GM10248 (cell line): ENCODE measurements at regions of chr20 and their contacts with region 1.

Region 1: DNA sequence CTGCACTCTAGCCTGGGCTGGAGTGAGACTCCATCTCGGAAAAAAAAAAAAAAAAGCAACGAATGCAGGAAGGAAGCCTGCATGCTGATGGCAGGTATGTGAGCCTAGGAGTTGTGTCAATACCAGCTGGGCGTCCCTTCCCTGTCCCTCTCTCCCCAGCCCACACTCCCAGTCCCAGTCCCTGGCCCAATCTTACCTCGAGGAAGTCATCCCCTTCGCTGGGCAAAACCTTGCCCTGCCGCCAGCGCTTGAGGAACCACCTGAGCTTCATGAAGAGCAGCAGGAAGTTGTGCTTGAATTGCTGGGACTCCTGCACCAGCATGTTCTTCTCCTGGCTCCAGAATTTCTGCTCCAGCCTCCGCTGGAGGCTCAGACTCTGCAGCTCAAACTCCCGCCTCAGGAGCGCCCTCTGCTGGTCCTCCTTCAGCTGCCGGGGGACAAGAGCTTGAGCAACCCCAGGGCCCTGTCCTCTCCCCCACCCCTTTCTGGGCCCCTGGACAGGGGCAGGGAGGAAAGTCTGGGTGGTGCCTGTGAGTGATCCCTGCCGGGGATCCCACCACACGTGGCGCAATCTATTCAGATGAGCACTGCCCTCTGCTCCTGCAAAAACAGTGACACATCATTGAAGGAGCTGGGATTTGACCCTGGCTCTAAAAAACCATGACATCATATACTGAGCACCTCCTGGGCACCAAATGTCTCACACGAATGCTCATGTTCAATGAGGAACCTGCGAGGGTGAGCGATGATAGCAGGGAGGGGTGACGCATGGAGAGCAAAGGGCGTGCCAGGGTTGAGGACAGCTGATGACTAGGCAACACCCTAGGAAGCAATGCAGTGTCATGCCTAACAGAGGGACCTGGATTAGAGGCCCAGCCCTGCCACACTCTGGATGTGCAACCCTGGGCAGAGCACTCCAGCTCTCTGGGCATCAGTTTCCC is 35.0 kb upstream of the DSN1 start:
- DNase-seq: peak; percentile 80
- CTCF ChIP-seq: peak; percentile 84

Region 2: DNA sequence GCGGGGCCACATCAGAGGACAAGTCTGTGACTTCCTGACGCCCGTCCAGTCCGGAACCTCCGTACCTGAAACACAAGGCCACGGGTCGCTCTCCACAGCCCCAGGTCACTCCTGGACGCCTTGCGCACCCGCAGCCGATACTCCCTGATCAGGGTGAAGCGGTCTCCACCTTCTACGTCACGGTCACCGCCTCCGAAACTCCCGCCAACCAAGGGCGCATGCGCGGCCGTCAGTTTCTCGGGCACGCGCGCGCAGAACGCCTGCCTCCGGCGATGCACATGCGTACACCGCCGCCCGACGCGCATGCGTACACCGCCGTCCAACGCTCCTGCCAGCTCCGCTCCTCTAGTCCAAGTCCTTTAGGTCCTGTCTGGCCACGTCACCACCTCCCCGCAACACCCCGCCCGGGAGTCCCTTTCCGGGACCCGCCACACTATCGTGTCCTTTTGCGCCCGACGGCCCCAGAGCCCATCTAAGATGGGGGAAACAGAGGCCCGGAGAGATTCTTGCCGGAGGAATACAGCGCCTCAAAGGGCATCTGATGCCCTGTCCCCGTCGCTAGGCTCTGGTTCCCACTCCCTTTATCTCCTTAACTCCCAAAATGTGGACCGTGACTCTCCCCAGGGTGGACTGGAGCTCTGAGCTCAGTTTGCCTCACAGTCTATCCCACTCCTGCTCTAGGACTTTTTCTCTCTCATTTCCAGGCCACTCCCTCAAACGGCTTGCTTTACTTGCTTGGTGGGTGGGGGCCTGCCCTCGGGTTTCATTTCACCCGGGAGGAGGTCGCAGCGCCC is 34.8 kb before region 1 on chr20 and contains the start of gene DSN1:
- CTCF ChIA-PET with region 1: interaction called, 13 read pairs
- POLR2A ChIA-PET with region 1: no interaction called
- DNase-seq: peak; percentile 98
- CTCF ChIP-seq: no peak

Region 3: GRCh38 chr20:36821964-36822437 is 13.4 kb after region 1 on chr20:
- CTCF ChIA-PET with region 1: interaction called, 20 read pairs
- POLR2A ChIA-PET with region 1: no interaction called
- DNase-seq: no peak
- CTCF ChIP-seq: no peak

Region 4: DNA sequence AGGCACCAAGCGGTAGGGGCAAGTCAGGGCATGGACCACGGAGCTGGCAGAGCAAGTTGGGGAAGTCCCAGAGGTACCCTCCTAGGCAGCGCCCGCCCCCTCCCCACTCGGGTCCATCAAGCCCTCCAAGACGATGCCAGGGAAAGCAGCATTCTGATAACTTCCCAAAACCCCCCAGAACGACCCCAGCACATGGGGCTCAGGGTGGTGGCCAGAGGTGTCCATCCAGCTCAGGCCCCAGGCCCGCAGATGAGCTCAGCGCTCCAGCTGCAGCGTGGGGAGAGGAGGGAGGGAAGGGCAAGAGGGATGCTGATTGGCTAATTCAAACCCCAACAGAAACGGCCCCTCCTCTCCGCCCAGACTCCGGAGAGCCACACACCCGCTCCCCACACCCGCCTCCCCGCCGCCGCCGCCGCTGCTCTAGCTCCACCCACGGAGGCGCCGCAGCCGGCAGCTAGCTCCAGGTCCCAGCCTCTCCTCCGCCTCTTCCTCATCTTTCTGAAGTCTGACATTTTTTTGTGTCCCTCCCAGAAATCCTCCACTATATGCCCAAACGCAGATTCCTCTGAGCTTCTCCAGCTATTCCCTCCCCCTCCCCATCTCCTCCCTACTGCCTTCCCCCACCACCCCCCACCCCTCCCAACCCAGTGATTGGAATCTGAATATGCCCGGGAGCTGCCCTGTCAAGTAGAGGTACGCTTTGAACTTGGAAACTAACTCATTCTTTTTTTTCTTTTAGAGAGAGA is 27.0 kb after region 1 on chr20:
- CTCF ChIA-PET with region 1: interaction called, 19 read pairs
- POLR2A ChIA-PET with region 1: interaction called, 6 read pairs
- DNase-seq: peak; percentile 97
- CTCF ChIP-seq: no peak

Region 5: DNA sequence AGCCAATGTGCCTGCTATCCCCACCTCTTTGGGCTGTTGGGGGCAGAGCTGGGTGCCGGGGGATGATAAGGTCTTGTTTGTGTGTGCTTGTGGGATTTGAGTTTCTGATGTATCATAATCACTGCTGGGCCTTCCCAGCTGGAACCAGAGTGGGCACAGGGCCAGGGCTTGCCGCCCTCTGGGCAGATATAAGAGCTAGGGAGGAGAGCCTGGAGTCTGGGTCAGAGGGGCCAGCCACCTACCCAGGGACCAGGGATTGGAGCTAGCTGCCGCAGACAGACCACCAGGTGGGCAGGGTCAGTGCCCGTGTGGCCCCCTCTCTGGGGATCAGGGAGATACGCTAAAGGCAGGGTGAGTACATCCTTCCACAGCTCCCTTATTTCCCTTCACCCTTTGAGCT is 64.3 kb after region 1 on chr20:
- CTCF ChIA-PET with region 1: interaction called, 10 read pairs
- POLR2A ChIA-PET with region 1: no interaction called
- DNase-seq: no peak
- CTCF ChIP-seq: no peak